HepG2 (cell line): ENCODE measurements at regions of chr2 and their contacts with region 1.

Region 1: GRCh38 chr2:218852911-218853667 is 6.5 kb upstream of the WNT6 start:
- DNase-seq: peak; percentile 61
- ATAC-seq: peak; percentile 69
- H3K4me3 ChIP-seq: no peak overlapping the region
- H3K27ac ChIP-seq: no peak overlapping the region
- H3K4me1 ChIP-seq: peaks cover 30% of the 10 kb centered on the region
- H3K27me3 ChIP-seq: peaks cover 8 to 74% of the 10 kb centered on the region in 2 experiments; a peak in 4 of 5 replicates
- CTCF ChIP-seq: peak; percentile 94
- EP300 ChIP-seq: no peak
- POLR2A ChIP-seq: no peak
- RAD21 ChIP-seq: peak; percentile 86

Region 2: DNA sequence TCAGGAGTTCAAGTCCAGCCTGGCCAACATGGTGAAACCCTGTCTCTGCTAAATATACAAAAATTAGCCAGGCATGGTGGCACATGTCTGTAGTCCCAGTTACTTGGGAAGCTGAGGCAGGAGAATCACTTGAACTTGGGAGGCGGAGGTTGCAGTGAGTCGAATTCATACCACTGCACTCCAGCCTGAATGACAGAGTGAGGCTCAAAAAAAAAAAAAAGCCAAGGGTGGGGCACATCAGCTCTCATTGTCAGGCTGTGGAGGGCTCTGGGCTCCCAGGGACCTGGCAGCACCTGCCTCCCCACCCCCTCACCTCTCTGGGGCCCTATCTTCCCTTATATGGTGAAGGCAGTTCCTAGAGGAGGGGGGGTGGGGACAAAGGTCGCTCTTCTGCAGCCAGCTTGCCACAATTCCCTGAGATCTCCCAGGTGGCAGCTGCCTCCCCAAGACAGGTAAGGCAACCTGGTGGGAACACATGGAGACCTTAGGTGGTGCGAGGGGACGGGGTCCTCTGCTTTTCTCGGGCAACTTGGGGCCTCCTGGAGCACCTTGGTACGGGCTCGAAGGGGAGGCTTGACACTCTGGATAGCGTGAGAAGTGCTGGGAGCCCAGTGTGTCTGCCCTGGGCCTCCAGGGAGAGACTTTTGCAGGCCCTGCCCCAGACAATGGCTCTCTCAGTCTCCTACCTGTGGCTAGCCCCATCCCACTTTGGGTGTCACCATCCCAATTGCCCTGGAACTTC is 434.2 kb before region 1 on chr2 and contains the start of gene VIL1:
- CTCF ChIA-PET with region 1: no interaction called
- POLR2A ChIA-PET with region 1: no interaction called
- in situ Hi-C with region 1: no loop called
- intact Hi-C with region 1: no loop called
- DNase-seq: peak; percentile 94
- ATAC-seq: peak; percentile 89
- H3K4me3 ChIP-seq: peak within 1 kb of the TSS; percentile 73 to 89 (median 78)
- H3K27ac ChIP-seq: peak within 1 kb of the TSS; percentile 76
- H3K4me1 ChIP-seq: peaks cover 57% of the 10 kb centered on the region
- H3K27me3 ChIP-seq: no peaks in the 10 kb centered on the region; a peak in 1 of 5 replicates
- CTCF ChIP-seq: peak; percentile 15; the same call in 1 of the 2 replicates
- EP300 ChIP-seq: peak in 1 of 2 experiments; percentile 75; a peak in 2 of 4 replicates
- POLR2A ChIP-seq: peak; percentile 92 to 99
- RAD21 ChIP-seq: peak; percentile 38; the same call in 1 of the 2 replicates
- total RNA-seq, gene VIL1: 301 and 337 TPM in 2 replicates

Region 3: GRCh38 chr2:218659258-218659987 is 193.7 kb before region 1 on chr2 and contains the starts of genes BCS1L and ZNF142:
- CTCF ChIA-PET with region 1: interaction called, 41 read pairs
- POLR2A ChIA-PET with region 1: interaction called, 11 read pairs
- in situ Hi-C with region 1: no loop called
- intact Hi-C with region 1: no loop called
- DNase-seq: peak; percentile 89
- ATAC-seq: peak; percentile 96
- H3K4me3 ChIP-seq: peak within 1 kb of the TSS; percentile 78 to 92 (median 80)
- H3K27ac ChIP-seq: peak within 1 kb of the TSS; percentile 59
- H3K4me1 ChIP-seq: peaks cover 24% of the 10 kb centered on the region
- H3K27me3 ChIP-seq: no peaks in the 10 kb centered on the region; a peak in 1 of 5 replicates
- CTCF ChIP-seq: peak; percentile 32
- EP300 ChIP-seq: peak in 1 of 2 experiments; percentile 25; a peak in 1 of 4 replicates
- POLR2A ChIP-seq: peak; percentile 66 to 93
- RAD21 ChIP-seq: peak; percentile 51
- total RNA-seq, gene BCS1L: 52.1 and 76.0 TPM in 2 replicates
- total RNA-seq, gene ZNF142: 10.4 and 11.4 TPM in 2 replicates

Region 4: DNA sequence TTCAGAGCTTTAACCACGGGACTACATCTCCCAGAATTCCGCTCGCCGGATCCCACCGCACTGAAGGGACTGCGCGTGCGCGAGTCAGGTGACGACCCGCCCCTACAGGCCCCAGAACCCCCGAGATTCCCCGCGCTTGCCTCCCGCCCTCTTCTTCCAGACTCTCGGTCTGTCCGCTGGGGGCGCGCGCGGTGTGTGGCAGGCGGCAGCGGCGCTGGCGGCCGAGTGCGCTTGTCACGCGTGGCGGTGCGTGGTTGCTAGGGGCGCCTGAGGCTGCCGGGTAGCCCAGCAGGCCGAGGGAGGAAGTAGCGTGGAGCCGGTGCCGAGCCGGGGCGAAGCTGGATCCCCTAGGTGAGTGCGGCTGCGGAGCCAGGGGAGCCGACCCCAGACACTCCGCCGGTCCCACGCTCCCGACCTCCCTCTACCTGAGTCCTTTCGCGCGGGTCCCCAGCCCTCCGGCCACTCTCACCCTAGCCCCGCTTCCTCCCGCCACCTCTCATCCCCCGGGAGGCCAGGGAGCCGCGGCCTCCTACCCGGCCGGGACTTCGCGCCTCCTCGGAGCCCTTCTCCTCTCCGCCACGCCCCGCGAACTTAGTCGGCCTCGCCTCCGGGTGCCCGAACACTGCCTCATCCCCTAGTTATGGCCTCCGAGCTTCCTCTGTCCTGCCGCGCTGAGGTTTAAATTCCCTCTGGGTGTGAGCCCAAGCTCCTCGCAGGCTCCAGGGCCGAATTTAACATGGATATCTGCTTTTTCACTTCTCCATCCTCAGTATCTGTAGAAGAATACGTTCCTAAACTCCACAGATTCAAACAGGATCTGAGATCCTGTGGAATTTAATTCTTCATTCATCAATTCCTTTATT is 142.2 kb before region 1 on chr2 and contains the start of gene TTLL4:
- CTCF ChIA-PET with region 1: interaction called, 49 read pairs
- POLR2A ChIA-PET with region 1: interaction called, 7 read pairs
- in situ Hi-C with region 1: no loop called
- intact Hi-C with region 1: no loop called
- DNase-seq: peak; percentile 95
- ATAC-seq: peak; percentile 95
- H3K4me3 ChIP-seq: peak within 1 kb of the TSS; percentile 88 to 97 (median 93)
- H3K27ac ChIP-seq: peak within 1 kb of the TSS; percentile 74
- H3K4me1 ChIP-seq: peaks cover 42% of the 10 kb centered on the region
- H3K27me3 ChIP-seq: no peaks in the 10 kb centered on the region; a peak in 1 of 5 replicates
- CTCF ChIP-seq: peak; percentile 98
- EP300 ChIP-seq: peak in 1 of 2 experiments; percentile 29; a peak in 1 of 4 replicates
- POLR2A ChIP-seq: peak; percentile 79 to 94
- RAD21 ChIP-seq: peak; percentile 84
- total RNA-seq, gene TTLL4: 77.5 and 78.0 TPM in 2 replicates

Region 5: GRCh38 chr2:218733171-218734021 is 119.7 kb before region 1 on chr2:
- CTCF ChIA-PET with region 1: interaction called, 241 read pairs
- POLR2A ChIA-PET with region 1: interaction called, 4 read pairs
- in situ Hi-C with region 1: loop called (anchors 25 kb)
- intact Hi-C with region 1: no loop called
- DNase-seq: peak; percentile 84
- ATAC-seq: peak; percentile 35
- H3K4me3 ChIP-seq: peak overlapping the region in 1 of 3 experiments; percentile 0; a peak in 1 of 6 replicates
- H3K27ac ChIP-seq: peak overlapping the region; percentile 76
- H3K4me1 ChIP-seq: peaks cover 47% of the 10 kb centered on the region
- H3K27me3 ChIP-seq: no peaks in the 10 kb centered on the region
- CTCF ChIP-seq: peak; percentile 23; the same call in 1 of the 2 replicates
- EP300 ChIP-seq: peak in 1 of 2 experiments; percentile 93; a peak in 2 of 4 replicates
- POLR2A ChIP-seq: no peak
- RAD21 ChIP-seq: no peak